Left cardiac atrium (tissue), 4 donors: ENCODE measurements at regions of chr6 and their contacts with region 1.

Region 1: DNA sequence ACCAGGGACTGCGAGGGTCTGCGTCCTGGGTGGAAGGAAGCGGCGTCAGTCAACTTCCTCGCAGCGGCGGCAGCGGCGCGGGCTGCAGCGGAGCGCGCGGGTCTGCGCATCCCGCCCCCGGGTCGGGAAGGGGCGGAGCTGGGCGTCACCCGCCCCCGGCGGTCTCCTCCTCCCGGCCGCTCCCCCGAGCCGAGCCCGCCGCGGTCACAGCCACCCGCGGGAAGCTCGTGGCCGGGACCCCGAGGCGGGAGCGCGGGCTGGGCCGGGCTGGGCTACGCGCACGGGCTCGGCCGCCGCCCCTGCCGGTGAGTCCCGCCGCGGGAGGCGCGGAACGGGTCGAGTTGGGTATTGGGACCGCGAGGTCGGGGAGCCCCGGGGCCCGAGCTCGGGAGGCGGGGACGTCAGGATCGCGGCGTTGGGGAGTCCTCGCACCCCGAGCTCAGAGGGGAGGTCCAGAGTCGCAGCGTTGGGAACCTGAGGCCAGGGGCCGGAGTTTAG is at the start of gene PAQR8:
- DNase-seq: peak; percentile 87
- ATAC-seq: peak; percentile 98 to 99
- total RNA-seq, gene PAQR8: 3.0 to 3.9 TPM

Region 2: DNA sequence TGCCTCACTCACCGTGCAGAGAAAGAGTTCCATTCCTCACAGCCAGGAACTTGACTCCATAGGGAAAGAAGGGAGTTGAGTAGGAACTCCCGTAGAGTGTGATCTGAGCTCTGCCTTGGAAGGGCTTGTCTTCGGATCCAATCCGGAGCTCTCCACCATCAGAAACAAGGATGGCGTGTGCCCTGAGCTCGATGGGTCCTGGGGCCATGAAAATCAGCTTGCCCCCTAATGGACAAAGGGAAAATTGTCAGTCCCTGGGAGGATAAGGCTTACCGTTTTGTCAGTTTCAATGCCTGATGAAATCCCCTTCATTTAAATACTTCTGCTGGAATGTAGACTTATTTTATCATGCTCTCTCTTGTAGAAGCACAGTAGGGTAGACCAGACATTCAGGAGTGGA is 427.9 kb before region 1 on chr6:
- intact Hi-C with region 1: no loop called
- DNase-seq: no peak
- ATAC-seq: no peak

Region 3: DNA sequence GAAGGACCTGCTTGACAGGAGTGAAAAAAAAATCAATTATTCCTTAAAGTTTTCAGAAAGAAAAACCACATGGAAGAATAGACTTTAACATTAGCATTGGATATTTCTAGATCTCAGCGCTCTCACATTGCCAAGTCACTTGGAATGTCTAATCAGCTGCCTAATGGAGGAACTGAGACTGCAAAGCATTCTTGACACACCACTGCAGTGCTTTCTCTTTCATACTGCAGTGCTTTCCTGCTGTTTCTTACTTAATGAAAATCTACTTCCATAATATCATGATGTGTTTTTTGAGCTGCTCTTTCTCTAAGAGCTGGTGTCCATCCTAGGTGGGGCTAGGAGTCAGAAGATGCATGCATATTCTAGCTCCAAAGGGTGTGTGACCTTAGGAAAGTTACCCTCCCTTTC is 57.0 kb before region 1 on chr6:
- intact Hi-C with region 1: loop called in 1 of 2 experiments (anchors 5 kb)
- DNase-seq: no peak
- ATAC-seq: peak; percentile 72 to 80